Transverse colon (tissue), 4 donors: ENCODE measurements at regions of chr4 and their contacts with region 1.

Region 1: DNA sequence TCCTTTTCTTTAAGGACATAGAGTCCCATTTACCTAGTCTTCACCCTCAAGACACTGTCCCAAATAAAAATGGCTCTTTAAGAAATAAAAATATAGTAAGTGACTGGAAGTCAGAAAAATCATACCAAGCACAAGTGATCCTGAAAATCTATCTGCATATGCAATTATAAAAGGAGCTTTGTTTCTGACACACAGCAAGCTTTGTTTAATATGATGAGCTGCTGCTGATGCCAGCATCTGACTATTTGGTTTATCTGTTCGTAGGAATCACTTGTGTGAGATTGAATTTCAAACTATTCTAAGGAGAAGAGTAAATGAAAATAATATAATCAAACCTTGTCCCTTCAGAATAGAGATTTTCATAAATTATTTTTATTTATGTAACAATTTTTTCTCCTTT is 332.4 kb downstream of the PCDH7 start:
- DNase-seq: no peak
- H3K4me3 ChIP-seq: no peak overlapping the region
- H3K27ac ChIP-seq: no peak overlapping the region
- H3K4me1 ChIP-seq: peaks cover 0 to 3% (median 0%) of the 10 kb centered on the region in 4 donors
- H3K27me3 ChIP-seq: no peaks in the 10 kb centered on the region
- CTCF ChIP-seq: no peak
- EP300 ChIP-seq: no peak
- POLR2A ChIP-seq: no peak

Region 2: DNA sequence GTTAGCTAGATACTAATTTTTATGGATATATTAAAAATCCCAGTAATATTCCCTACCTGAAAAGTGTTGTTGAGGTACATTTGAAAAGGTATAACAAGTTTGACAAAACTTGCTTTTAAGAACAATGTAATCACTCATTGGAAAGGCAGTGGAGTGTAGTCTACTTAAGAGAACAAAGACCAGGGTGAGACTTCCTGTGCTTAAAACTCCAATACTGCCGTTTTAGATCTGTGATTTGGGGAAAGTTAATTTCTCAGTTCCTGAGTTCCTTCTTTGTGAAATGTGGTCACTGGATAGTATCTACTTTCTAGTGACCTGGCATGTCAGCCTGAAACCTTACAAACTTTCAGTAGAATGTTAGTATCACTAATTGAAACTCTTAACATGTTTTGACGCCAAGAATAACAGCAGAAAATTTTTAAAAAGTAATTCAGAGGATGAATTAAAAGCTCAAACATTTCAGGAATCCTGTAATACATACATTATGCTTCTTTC is 275.6 kb before region 1 on chr4:
- in situ Hi-C with region 1: no loop called
- intact Hi-C with region 1: no loop called
- DNase-seq: no peak
- H3K4me3 ChIP-seq: no peak overlapping the region
- H3K27ac ChIP-seq: peak overlapping the region in 1 of 4 donors; percentile 8
- H3K4me1 ChIP-seq: no peaks in the 10 kb centered on the region
- H3K27me3 ChIP-seq: no peaks in the 10 kb centered on the region
- CTCF ChIP-seq: no peak
- EP300 ChIP-seq: no peak
- POLR2A ChIP-seq: no peak

Region 3: DNA sequence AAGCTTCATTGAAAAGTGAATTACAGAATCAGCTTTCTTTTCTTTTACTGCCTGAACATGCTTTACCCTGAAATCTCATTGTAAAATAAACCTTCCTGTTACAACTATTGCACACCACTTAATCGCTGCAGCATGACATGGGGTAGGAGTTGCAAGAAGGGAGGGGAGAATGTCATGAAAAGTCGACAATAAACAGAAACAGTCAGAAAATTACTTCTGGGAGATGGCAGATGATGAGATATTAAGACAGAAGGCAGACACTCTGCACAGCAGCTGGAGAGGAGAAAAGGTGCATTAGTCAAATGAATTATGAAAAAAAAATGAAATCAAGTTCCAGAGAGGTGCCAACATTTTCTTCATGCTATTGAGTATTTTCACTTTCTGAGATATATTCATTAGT is 44.7 kb before region 1 on chr4:
- in situ Hi-C with region 1: no loop called
- intact Hi-C with region 1: loop called (anchors 2 kb)
- DNase-seq: no peak
- H3K4me3 ChIP-seq: no peak overlapping the region
- H3K27ac ChIP-seq: no peak overlapping the region
- H3K4me1 ChIP-seq: no peaks in the 10 kb centered on the region
- H3K27me3 ChIP-seq: no peaks in the 10 kb centered on the region
- CTCF ChIP-seq: no peak
- EP300 ChIP-seq: no peak
- POLR2A ChIP-seq: no peak